Right ventricle myocardium inferior (tissue), 1 donor: ENCODE measurements at regions of chr1 and their contacts with region 1.

Region 1: GRCh38 chr1:114346480-114347029 is 164.4 kb downstream of the TRIM33 start:
- DNase-seq: peak; percentile 98
- ATAC-seq: peak; percentile 99

Region 2: GRCh38 chr1:114330451-114330983 is 16.0 kb before region 1 on chr1:
- intact Hi-C with region 1: no loop called
- DNase-seq: no peak
- ATAC-seq: no peak

Region 3: GRCh38 chr1:114428083-114428749 is 81.7 kb after region 1 on chr1:
- intact Hi-C with region 1: loop called (anchors 5 kb)
- DNase-seq: no peak
- ATAC-seq: no peak

Region 4: DNA sequence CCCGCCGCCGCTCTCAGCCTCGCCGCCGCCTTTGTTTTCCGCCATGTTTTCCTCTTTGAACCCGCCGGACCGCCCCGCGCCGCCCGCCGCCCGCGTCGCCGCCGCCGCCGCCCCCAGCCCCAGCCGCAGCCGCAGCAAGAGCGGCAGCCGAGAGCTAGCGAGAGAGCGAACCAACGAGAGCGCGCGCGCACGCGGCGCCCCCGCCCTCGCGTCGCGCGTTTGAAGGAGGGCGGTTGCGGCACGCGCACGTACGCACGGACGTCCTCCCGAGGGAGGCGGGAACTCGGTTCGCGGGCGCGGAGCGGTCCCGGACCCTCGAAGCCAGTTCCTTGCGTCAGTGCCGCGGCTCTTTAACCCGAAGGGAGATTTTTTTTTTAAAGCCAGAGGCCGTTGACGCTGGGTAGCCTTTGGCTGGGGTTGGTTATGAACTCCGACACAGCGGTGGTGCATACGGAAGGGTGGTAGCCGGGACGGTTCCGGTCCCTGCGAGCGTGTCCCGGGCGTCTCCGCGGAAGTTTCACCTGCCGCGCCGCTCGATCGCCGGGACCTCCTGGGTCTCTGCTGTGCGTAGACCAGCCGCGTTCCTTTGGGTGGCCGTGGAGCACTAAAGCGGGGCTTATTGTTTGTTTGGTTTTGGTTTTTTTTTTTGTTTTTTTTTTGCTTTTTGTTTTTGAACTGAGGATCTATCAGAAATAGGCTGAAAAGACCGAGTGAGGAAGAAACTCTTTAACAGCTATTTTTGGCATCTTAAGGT is 164.7 kb after region 1 on chr1 and contains the start of gene TRIM33:
- intact Hi-C with region 1: loop called (anchors 5 kb)
- DNase-seq: peak; percentile 96
- ATAC-seq: peak; percentile 97
- total RNA-seq, gene TRIM33: 14.5 TPM

Region 5: GRCh38 chr1:114558544-114558943 is 212.0 kb after region 1 on chr1:
- intact Hi-C with region 1: loop called (anchors 5 kb)
- DNase-seq: no peak
- ATAC-seq: no peak

Region 6: DNA sequence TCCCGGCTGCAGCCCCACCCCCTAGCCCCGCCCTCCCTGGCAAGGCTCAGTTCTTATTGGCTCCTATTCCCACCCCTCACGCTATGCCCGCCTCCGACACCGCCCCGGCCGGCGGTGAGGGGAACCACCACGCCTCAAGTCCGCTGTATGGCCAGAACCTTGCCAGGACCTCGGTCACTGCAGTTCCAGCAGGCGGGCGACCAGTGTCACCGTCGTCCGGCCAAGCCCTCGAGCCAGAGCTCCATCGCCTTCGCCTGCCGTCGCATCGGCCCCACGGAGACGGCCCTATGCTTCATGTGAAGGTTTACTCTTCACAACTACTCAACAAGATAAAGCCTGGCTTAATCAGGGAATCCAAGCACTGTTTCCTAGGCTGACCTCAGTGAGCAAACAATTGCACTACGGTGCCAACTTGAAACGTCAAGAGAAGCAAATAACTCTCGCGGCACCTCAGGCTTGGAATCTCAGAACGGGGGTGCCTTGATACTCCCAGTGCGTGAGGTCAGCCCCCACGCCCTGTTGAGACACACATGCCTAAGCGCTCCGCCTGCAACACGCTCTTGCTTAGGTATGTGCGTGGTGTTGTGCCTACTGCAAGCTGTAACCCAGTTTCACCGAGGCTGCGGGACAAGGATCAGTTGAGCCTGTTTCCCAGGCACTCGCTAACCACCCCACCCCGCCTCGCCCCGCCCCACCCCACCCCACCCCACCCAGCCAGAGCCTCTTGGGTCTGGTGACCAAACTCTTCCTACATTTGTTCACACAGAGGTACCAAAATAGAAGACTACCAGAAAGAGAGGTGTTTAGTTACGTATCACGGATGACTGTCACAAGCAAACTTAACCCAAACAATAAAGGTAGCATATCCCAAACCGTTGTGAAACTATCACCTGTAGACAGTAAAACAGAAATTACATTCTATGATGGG is 323.8 kb after region 1 on chr1:
- intact Hi-C with region 1: loop called (anchors 5 kb)
- DNase-seq: peak; percentile 95
- ATAC-seq: peak; percentile 100

Region 7: GRCh38 chr1:114780344-114781226 is 434.0 kb after region 1 on chr1 and contains the start of gene SIKE1:
- intact Hi-C with region 1: loop called (anchors 1 kb)
- DNase-seq: peak; percentile 96
- ATAC-seq: peak; percentile 98
- total RNA-seq, gene SIKE1: 34.2 TPM